Activated CD4-positive, alpha-beta T cell treated with anti-CD3 and anti-CD28 coated beads for 36 hours (primary cell): ENCODE measurements at regions of chr15 and their contacts with region 1.

Region 1: GRCh38 chr15:27884726-27885125 is 214.4 kb downstream of the OCA2 start:
- DNase-seq: no peak
- ATAC-seq: no peak
- H3K4me3 Mint-ChIP-seq: no peak overlapping the region
- H3K27ac Mint-ChIP-seq: no peak overlapping the region
- H3K4me1 Mint-ChIP-seq: no peaks in the 10 kb centered on the region
- H3K27me3 Mint-ChIP-seq: no peaks in the 10 kb centered on the region

Region 2: DNA sequence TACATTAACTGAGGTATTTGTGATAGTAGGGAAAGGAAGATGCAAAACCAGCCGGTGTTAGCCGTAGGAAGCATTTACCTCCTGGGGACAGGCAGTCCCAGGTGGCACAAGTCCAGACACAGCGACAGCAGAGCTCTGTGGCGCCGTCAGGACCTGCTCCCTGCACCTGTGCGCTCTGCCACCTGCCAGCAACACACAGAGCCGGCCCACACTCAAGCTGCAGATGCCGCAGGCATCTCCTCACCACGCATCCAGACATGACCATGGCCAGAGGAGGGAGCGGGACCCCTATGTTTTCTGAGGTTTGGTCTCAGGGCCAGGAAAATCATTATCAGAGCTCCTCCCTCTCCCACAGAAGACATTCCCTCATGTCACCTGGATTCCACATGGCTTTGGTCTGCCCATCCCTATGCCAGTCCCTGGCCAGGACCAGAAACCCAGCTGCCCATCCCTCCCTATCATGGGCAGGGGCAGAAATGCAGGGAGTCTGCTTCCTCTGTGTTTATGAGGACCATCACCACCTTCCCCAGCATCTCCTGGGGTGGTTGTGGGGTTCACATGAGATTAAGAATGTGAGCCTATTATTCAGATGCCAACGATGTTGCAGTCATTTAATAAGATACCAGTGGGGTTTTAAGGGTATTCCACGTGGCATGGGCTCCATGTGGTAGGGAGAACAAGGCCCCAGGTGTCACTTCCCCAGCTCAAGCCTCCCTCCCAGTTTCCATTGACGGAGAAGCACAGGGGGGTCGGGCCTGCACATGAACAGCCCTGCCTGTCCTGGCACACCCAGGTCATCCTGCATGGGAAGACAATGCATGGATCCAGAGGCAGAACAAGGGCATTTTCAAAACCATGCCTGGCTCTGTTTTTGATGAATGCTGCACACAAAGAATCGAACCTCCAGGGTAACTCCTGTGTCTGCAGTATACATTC is 36.7 kb before region 1 on chr15:
- CTCF ChIA-PET with region 1: no interaction called
- POLR2A ChIA-PET with region 1: no interaction called
- intact Hi-C with region 1: loop called in 1 of 2 experiments (anchors 5 kb)
- DNase-seq: no peak
- ATAC-seq: no peak
- H3K4me3 Mint-ChIP-seq: no peak overlapping the region
- H3K27ac Mint-ChIP-seq: no peak overlapping the region
- H3K4me1 Mint-ChIP-seq: no peaks in the 10 kb centered on the region
- H3K27me3 Mint-ChIP-seq: no peaks in the 10 kb centered on the region